ENCODE measurements at regions of chr2 and their contacts with region 1.

Region 1: DNA sequence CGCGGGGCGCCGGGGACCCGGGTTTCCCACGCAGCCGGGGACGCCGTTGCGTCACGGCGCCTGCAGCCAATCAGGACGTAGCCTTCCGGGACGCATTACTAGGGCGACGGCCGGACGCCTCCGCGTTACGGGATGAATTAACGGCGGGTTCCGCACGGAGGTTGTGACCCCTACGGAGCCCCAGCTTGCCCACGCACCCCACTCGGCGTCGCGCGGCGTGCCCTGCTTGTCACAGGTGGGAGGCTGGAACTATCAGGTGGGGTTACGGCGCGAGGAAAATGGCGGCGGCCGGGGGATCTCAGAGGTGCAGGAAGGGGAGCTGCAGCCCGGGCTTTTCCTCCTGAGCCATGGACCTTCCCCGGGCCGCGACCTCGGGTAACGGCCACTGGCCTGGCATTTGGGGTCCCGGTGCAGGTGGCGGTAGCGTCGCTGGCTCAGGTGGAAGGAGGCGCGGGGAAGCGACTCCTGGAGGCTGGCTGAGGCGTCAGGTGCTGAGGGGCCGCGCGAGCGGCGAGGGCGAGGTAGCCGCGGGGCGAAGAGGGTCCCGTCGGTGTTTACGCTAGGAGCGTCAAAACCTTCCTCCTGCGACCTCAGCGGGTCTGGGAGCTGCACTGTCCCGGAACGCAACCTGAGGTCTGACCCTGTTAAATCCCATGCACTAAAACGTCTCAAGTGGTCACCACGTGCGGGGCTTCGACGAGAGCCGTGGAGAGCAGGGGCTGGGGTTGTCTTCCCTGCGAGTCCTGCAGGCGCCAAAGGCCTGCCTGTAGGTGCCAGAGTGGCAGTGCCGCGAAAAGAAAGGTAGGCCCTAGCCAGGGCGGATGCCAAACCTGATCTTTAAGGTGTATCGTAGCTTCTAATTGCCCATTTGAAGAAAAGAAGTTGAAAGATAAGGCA is at the start of gene LCLAT1:
- DNase-seq: peak; percentile 67
- H3K4me3 ChIP-seq: peak within 1 kb of the TSS; percentile 74 to 96 (median 79)
- H3K27ac ChIP-seq: peak within 1 kb of the TSS; percentile 77
- H3K4me1 ChIP-seq: peaks cover 18% of the 10 kb centered on the region
- H3K27me3 ChIP-seq: no peaks in the 10 kb centered on the region
- CTCF ChIP-seq: no peak
- total RNA-seq, gene LCLAT1: 26.4 to 27.8 TPM

Region 2: DNA sequence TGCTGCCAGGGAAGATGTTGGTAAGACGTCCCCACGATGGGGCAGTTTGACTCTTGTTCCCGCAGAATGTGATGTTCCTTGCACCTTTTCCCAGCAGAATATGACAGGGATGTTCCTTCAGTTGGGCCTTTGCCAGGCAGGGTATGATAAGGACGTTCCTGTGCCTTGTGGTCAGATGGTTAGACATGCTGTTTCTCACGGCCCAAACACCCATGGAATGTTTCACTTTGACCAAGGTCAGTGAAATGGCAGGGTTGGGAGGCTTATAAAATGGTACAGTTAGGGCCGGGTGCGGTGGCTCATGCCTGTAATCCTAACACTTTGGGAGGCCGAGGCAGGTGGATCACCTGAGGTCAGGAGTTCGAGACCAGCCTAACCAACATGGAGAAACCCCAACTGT is 340.9 kb before region 1 on chr2:
- CTCF ChIA-PET with region 1: no interaction called
- dilution Hi-C with region 1: no loop called
- in situ Hi-C with region 1: no loop called
- intact Hi-C with region 1: no loop called
- DNase-seq: peak; percentile 5
- H3K4me3 ChIP-seq: no peak overlapping the region
- H3K27ac ChIP-seq: no peak overlapping the region
- H3K4me1 ChIP-seq: peaks cover 8% of the 10 kb centered on the region
- H3K27me3 ChIP-seq: no peaks in the 10 kb centered on the region
- CTCF ChIP-seq: no peak

Region 3: GRCh38 chr2:30208452-30208851 is 238.9 kb before region 1 on chr2:
- CTCF ChIA-PET with region 1: no interaction called
- dilution Hi-C with region 1: no loop called
- in situ Hi-C with region 1: no loop called
- intact Hi-C with region 1: loop called (anchors 1 kb)
- DNase-seq: peak; percentile 39
- H3K4me3 ChIP-seq: no peak overlapping the region
- H3K27ac ChIP-seq: no peak overlapping the region
- H3K4me1 ChIP-seq: no peaks in the 10 kb centered on the region
- H3K27me3 ChIP-seq: peaks cover 9% of the 10 kb centered on the region
- CTCF ChIP-seq: peak; percentile 88 to 90

Region 4: DNA sequence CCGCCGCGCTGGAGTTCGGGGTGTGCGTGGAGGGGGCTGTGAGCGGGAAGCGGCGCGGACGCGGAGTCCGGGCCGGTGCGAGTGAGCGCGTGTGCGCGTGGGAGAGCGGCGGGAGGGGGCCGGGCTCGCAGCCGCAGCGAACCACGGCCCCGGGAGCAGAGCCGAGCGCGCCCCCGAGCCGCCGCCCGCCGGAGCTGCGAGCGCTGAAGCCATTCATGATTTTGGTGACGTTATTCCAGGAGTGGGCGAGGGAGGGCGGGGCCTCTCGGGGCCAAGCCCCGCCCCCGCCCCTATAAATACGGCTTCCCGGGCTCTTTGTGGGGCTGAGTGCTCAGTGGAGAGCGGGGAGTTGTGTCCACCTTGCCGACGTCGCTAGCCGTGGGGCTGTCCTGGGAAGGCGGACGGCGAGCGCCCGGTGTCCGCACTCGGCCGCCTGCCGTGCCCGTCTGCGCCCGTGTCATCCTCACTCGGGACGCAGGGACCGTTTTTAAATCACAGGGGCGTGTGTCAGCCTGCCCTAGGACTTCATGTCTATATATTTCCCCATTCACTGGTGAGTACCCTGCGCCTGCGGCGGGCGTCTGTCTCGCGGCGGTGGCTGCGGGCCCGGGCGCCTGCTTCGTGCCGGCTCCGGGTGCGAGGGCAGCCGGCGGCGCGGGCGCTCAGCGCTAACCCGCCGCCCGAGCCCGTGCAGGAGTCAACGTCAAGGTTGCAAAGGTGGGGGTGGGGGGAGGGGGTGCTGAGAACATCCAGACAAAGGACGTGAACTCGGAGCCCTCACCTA is 216.0 kb before region 1 on chr2 and contains the start of gene LBH:
- CTCF ChIA-PET with region 1: no interaction called
- dilution Hi-C with region 1: no loop called
- in situ Hi-C with region 1: no loop called
- intact Hi-C with region 1: loop called (anchors 10 kb)
- DNase-seq: peak; percentile 73
- H3K4me3 ChIP-seq: peak within 1 kb of the TSS; percentile 50 to 52 (median 52)
- H3K27ac ChIP-seq: no peak within 1 kb of the TSS
- H3K4me1 ChIP-seq: peaks cover 34% of the 10 kb centered on the region
- H3K27me3 ChIP-seq: no peaks in the 10 kb centered on the region
- CTCF ChIP-seq: no peak
- total RNA-seq, gene LBH: 1.2 to 56.5 TPM

Region 5: GRCh38 chr2:30273261-30273861 is 174.0 kb before region 1 on chr2:
- CTCF ChIA-PET with region 1: interaction called, 8 read pairs
- dilution Hi-C with region 1: no loop called
- in situ Hi-C with region 1: no loop called
- intact Hi-C with region 1: loop called (anchors 10 kb)
- DNase-seq: no peak
- H3K4me3 ChIP-seq: no peak overlapping the region
- H3K27ac ChIP-seq: no peak overlapping the region
- H3K4me1 ChIP-seq: peaks cover 27% of the 10 kb centered on the region
- H3K27me3 ChIP-seq: no peaks in the 10 kb centered on the region
- CTCF ChIP-seq: no peak

Region 6: GRCh38 chr2:30492185-30492584 is 44.8 kb after region 1 on chr2:
- CTCF ChIA-PET with region 1: no interaction called
- dilution Hi-C with region 1: loop called (anchors 5 kb)
- in situ Hi-C with region 1: no loop called
- intact Hi-C with region 1: no loop called
- DNase-seq: no peak
- H3K4me3 ChIP-seq: no peak overlapping the region
- H3K27ac ChIP-seq: no peak overlapping the region
- H3K4me1 ChIP-seq: no peaks in the 10 kb centered on the region
- H3K27me3 ChIP-seq: no peaks in the 10 kb centered on the region
- CTCF ChIP-seq: no peak

Region 7: GRCh38 chr2:30704309-30705020 is 257.1 kb after region 1 on chr2:
- CTCF ChIA-PET with region 1: no interaction called
- dilution Hi-C with region 1: no loop called
- in situ Hi-C with region 1: no loop called
- intact Hi-C with region 1: loop called (anchors 1 kb)
- DNase-seq: no peak
- H3K4me3 ChIP-seq: no peak overlapping the region
- H3K27ac ChIP-seq: no peak overlapping the region
- H3K4me1 ChIP-seq: no peaks in the 10 kb centered on the region
- H3K27me3 ChIP-seq: no peaks in the 10 kb centered on the region
- CTCF ChIP-seq: no peak

Region 8: DNA sequence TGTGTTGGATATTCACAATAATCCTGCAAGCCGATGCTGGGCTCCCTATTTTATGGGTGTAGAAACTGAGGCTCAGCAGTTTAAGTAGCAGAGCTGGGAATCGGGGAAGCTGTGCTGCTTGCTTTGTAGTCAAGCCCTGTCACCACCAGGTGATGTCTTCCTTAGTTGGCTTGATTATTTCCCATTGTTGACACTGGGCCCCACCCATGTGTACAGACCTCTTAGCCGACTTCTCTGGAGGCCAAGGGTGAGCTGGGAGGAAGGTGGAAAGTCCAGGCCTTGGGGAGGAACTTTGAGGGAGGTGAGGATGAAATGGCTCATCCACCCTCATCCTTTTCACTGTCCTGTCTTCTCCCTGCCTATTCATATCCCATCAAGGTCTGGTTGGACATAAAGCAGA is 299.8 kb after region 1 on chr2:
- CTCF ChIA-PET with region 1: no interaction called
- dilution Hi-C with region 1: no loop called
- in situ Hi-C with region 1: no loop called
- intact Hi-C with region 1: no loop called
- DNase-seq: no peak
- H3K4me3 ChIP-seq: no peak overlapping the region
- H3K27ac ChIP-seq: no peak overlapping the region
- H3K4me1 ChIP-seq: no peaks in the 10 kb centered on the region
- H3K27me3 ChIP-seq: no peaks in the 10 kb centered on the region
- CTCF ChIP-seq: no peak